ENCODE measurements at regions of chr11 and their contacts with region 1.

Region 1: DNA sequence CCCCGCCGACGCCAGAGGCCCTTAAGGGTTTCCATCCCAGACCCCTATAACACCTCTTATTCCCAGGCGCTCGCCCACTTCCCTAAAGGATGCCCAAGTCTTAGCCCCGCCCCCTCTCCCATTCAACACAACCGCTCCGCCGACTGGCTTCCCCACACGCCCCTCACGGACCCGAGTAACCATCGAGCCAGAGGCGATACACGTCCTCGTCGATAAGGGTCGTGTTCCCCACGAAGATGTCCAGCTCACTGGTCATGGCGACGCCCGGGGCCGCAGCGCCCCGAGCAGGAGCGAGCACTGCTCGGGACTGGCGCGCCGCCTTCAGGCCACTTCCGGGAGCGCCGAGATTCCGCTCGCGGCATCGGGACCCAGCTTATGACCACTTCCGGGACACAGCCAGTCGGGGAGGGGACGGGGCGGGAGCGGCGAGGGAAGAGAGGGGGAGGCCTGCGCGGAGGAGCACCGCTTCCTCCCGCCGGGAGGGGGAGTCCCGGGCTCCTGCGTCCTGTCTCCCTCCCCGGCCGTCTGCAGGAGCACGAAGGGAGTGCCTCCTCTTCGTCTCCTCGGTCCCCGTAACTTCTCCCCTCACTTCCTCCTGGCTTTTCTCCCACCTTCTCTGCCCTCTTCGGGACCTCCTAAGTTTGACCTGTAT is at the start of gene FIBP:
- DNase-seq: peak; percentile 98
- ATAC-seq: peak; percentile 63
- H3K4me3 Mint-ChIP-seq: peak within 1 kb of the TSS; percentile 96
- H3K27ac Mint-ChIP-seq: peak within 1 kb of the TSS; percentile 95
- H3K4me1 Mint-ChIP-seq: peaks cover 68% of the 10 kb centered on the region
- H3K27me3 Mint-ChIP-seq: no peaks in the 10 kb centered on the region
- total RNA-seq, gene FIBP: 100 to 122 TPM

Region 2: GRCh38 chr11:65711785-65712632 is 176.3 kb before region 1 on chr11 and contains the start of gene KAT5:
- CTCF ChIA-PET with region 1: interaction called, 29 read pairs
- DNase-seq: peak; percentile 100
- ATAC-seq: peak; percentile 87
- H3K4me3 Mint-ChIP-seq: peak within 1 kb of the TSS; percentile 83
- H3K27ac Mint-ChIP-seq: peak within 1 kb of the TSS; percentile 98
- H3K4me1 Mint-ChIP-seq: peaks cover 36% of the 10 kb centered on the region
- H3K27me3 Mint-ChIP-seq: peaks cover 2% of the 10 kb centered on the region
- total RNA-seq, gene KAT5: 62.0 to 69.8 TPM

Region 3: DNA sequence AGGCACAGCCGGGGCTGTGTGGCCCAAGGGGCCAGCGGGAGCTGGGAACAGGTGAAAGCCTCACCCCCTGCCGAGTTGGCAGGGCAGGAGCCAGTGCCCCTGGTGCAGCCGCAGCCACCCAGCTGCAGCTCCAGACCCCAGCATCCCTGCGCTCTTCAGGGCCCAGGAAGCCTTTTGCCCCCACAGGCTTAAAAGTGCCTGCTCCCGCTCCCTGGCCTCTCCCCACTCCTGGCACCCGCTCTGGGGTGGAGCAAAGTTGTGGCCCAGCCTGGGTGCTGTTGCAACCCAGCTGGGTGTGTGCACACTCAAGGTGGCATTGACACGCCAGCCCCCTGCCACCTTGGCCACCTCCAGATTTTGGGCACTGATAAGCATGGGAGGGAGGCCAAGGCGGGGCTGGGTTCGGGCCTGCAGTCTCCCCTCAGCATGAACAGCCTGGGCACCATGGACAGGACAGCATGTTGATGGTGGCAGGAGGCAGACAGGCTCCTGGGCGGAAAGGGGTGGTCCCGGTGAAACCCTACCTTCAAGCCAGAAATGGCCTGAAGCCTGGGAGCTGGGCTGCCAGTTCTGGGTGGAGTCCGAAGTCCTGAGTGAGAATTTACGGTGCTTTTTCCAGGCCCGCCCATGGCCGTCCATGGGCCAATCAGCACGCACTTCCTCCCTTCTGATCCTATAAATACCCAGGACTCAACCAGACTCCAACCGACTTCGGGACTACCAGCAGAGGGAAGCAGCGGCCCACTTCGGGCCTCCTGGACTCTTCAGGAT is 144.2 kb before region 1 on chr11:
- CTCF ChIA-PET with region 1: no interaction called
- DNase-seq: no peak
- ATAC-seq: no peak
- H3K4me3 Mint-ChIP-seq: no peak overlapping the region
- H3K27ac Mint-ChIP-seq: no peak overlapping the region
- H3K4me1 Mint-ChIP-seq: no peaks in the 10 kb centered on the region
- H3K27me3 Mint-ChIP-seq: peaks cover 40% of the 10 kb centered on the region

Region 4: DNA sequence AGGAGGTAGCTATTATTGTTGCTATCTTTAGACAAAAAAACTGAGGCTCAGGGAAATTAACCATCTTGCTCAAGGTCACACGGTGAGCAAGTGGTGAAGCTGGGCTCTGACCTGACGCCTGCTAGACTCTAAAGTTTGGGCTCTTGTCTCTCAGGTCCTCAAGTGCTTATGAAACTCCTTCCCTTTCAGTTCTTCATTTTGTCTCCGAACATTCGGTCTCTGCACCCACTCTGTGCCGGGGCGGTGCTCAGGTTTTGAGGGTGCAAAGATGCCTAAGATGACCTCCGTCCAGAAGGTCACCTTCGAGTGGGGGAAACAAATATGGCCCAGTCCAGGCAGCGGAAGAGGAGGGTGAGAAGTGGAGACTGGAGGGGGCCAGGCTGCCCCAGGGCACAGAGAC is 85.4 kb before region 1 on chr11:
- CTCF ChIA-PET with region 1: no interaction called
- DNase-seq: no peak
- ATAC-seq: no peak
- H3K4me3 Mint-ChIP-seq: no peak overlapping the region
- H3K27ac Mint-ChIP-seq: no peak overlapping the region
- H3K4me1 Mint-ChIP-seq: peaks cover 6% of the 10 kb centered on the region
- H3K27me3 Mint-ChIP-seq: peaks cover 40% of the 10 kb centered on the region

Region 5: DNA sequence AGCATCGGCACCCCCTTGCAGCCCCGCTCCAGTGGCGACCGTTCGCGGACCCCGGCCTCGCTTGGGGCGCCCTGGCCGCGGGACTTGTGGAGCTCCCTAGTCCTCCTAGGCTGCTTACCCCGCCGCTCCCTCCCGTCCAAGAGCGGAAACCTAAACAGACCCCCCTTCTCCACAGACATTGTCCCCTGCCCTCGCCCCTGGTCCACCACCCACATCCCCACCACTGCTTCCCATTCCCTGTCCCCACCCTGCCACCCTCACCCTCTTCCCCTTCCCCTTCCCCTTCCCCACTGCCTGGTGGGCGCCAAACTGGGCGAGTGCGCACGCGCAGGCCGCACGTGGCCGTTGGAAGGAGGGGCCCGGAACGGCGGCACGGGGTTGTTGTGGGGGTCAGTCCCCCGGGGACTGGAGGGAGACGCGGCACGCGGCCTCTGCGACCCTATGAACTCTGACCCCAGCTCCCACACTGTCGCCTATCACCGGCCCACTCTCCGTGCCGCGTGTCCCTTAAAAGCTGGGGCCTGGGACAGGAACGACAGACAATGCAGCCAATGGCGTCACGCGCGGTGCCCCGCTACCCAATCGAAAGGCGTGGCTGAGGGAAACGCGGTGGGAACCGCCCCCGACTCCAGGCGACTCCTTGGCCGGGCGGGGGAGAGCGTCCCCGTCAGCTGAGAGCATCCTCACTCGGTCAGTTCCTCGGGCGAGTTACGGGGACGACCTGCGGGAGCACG is 54.8 kb before region 1 on chr11 and contains the start of gene SNX32:
- CTCF ChIA-PET with region 1: interaction called, 10 read pairs
- DNase-seq: peak; percentile 97
- ATAC-seq: peak; percentile 100
- H3K4me3 Mint-ChIP-seq: no peak within 1 kb of the TSS
- H3K27ac Mint-ChIP-seq: peak within 1 kb of the TSS; percentile 31
- H3K4me1 Mint-ChIP-seq: peaks cover 15% of the 10 kb centered on the region
- H3K27me3 Mint-ChIP-seq: peaks cover 28% of the 10 kb centered on the region
- total RNA-seq, gene SNX32: 1.7 to 2.4 TPM

Region 6: GRCh38 chr11:65859200-65859811 is 29.0 kb before region 1 on chr11:
- CTCF ChIA-PET with region 1: interaction called, 710 read pairs
- DNase-seq: peak; percentile 100
- ATAC-seq: peak; percentile 71
- H3K4me3 Mint-ChIP-seq: peak overlapping the region; percentile 91
- H3K27ac Mint-ChIP-seq: peak overlapping the region; percentile 99
- H3K4me1 Mint-ChIP-seq: peaks cover 50% of the 10 kb centered on the region
- H3K27me3 Mint-ChIP-seq: no peaks in the 10 kb centered on the region

Region 7: GRCh38 chr11:65911682-65912568 is 23.6 kb after region 1 on chr11:
- CTCF ChIA-PET with region 1: interaction called, 34 read pairs
- DNase-seq: no peak
- ATAC-seq: no peak
- H3K4me3 Mint-ChIP-seq: no peak overlapping the region
- H3K27ac Mint-ChIP-seq: no peak overlapping the region
- H3K4me1 Mint-ChIP-seq: peaks cover 26% of the 10 kb centered on the region
- H3K27me3 Mint-ChIP-seq: peaks cover 2% of the 10 kb centered on the region

Region 8: GRCh38 chr11:65937766-65938165 is 49.5 kb after region 1 on chr11:
- CTCF ChIA-PET with region 1: interaction called, 18 read pairs
- DNase-seq: no peak
- ATAC-seq: no peak
- H3K4me3 Mint-ChIP-seq: no peak overlapping the region
- H3K27ac Mint-ChIP-seq: no peak overlapping the region
- H3K4me1 Mint-ChIP-seq: peaks cover 5% of the 10 kb centered on the region
- H3K27me3 Mint-ChIP-seq: peaks cover 8% of the 10 kb centered on the region

Region 9: DNA sequence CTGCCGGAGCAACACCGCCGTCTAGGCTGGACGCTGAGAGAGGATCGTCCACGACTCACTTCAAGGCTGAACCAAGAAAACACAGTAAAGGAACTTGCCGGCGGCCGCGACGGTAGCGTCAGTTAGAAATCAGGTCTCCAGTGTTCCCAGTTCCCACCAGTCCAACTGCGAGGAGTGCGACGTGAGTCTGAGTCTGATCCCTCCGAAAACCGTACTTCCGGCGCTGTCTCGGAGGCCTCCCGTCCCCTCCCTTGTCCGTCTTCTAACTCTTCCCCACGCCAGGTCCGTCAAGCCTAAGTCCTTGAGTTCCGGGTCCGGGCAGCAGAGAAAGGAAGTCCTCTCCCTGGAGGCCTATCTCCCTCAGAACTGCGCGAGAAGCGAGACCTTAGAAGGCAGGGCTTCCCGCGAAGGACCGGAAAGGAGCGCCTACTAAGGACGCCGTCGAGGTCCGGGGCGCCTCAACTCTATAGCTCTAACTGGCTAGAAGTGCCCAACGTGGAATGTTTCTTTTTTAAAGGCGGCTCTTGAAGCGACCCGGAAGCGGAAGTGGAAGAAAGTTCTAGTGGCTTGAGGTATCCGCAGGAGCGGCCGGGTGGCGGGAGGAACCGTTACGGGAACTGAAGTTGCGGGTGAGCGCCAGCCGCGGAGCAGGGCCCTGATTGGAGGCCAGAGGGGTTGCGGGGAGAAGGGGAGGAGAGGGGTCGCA is 113.8 kb after region 1 on chr11 and contains the starts of genes BANF1 and EIF1AD:
- CTCF ChIA-PET with region 1: interaction called, 14 read pairs
- DNase-seq: peak; percentile 97
- ATAC-seq: peak; percentile 89
- H3K4me3 Mint-ChIP-seq: peak within 1 kb of the TSS; percentile 99
- H3K27ac Mint-ChIP-seq: peak within 1 kb of the TSS; percentile 98
- H3K4me1 Mint-ChIP-seq: peaks cover 43% of the 10 kb centered on the region
- H3K27me3 Mint-ChIP-seq: no peaks in the 10 kb centered on the region
- total RNA-seq, gene BANF1: 199 to 227 TPM
- total RNA-seq, gene EIF1AD: 57.5 to 60.3 TPM

Measured in activated CD8-positive, alpha-beta memory T cell treated with anti-CD3 and anti-CD28 coated beads, Interleukin-2, amount 10 ng/mL, durations not matched to agents 7 days and 5 days (primary cell).